Head of caudate nucleus (tissue), 42 donors: ENCODE measurements at regions of chr17 and their contacts with region 1.

Region 1: DNA sequence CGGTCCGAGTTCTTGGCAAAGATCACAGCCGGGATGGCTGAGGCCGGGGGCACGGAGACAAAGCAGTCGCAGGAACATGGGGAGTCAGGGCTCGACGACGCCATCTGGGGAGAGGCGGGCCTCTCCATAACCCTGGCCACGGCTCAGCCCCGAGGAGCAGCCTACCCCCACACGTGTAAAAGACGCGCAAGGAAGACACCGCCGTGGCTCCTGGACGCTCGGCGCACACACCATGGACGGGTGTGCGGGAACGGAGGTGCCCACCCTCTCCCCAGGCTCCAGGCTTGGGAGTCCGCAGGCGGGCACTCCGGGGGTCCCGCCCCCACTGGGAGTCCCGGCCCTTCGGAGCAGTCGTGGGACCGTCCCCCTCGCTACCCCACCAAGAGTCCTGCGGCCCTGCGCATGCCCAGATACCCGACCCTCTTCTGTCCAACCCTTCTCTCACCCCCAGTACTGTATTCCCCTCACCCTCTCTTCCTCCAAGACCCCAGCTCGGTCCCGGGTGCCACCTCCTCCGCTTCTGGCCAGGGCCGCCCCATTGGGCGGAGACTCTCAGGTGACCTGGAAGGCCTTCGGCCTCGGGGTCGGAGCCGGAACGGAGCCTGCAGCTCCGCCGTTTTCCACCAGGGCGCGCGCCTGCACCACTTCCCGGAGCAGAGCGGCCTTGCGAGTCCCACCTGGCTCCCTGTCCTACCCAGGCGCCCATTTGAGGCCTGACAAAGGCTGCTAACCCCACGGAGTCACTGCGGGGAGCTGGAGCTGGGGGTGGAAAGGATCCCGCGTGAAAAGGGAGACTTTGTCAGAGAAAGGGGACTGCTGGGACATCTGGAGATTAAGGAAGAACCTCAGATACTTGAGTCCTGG is at the start of gene SCRN2:
- DNase-seq: peak; percentile 74 to 95 (median 89)

Region 2: GRCh38 chr17:47889734-47890529 is 49.0 kb after region 1 on chr17:
- intact Hi-C with region 1: loop called (anchors 2 kb)
- DNase-seq: peak; percentile 79 to 96 (median 91)

Region 3: GRCh38 chr17:47970704-47971463 is 129.9 kb after region 1 on chr17 and contains the start of gene CDK5RAP3:
- intact Hi-C with region 1: loop called (anchors 5 kb)
- DNase-seq: peak; percentile 99 to 100 (median 100)